ENCODE measurements at regions of chr15 and their contacts with region 1.

Region 1: GRCh38 chr15:41774062-41774881 is at the start of gene MAPKBP1:
- DNase-seq: peak; percentile 98
- H3K4me3 Mint-ChIP-seq: peak within 1 kb of the TSS; percentile 92
- H3K27ac Mint-ChIP-seq: peak within 1 kb of the TSS; percentile 85
- H3K4me1 Mint-ChIP-seq: peaks cover 35% of the 10 kb centered on the region
- H3K27me3 Mint-ChIP-seq: no peaks in the 10 kb centered on the region
- CTCF ChIP-seq: peak; percentile 58
- total RNA-seq, gene MAPKBP1: 33.2 and 35.0 TPM in 2 replicates

Region 2: GRCh38 chr15:41465822-41466421 is 308.4 kb before region 1 on chr15:
- CTCF ChIA-PET with region 1: interaction called, 5 read pairs
- POLR2A ChIA-PET with region 1: interaction called, 3 read pairs
- intact Hi-C with region 1: loop called (anchors 1 kb)
- DNase-seq: peak; percentile 59
- H3K4me3 Mint-ChIP-seq: no peak overlapping the region
- H3K27ac Mint-ChIP-seq: no peak overlapping the region
- H3K4me1 Mint-ChIP-seq: peaks cover 5% of the 10 kb centered on the region
- H3K27me3 Mint-ChIP-seq: no peaks in the 10 kb centered on the region
- CTCF ChIP-seq: peak; percentile 93

Region 3: GRCh38 chr15:41648770-41649169 is 125.5 kb before region 1 on chr15:
- CTCF ChIA-PET with region 1: no interaction called
- POLR2A ChIA-PET with region 1: no interaction called
- intact Hi-C with region 1: no loop called
- DNase-seq: no peak
- H3K4me3 Mint-ChIP-seq: no peak overlapping the region
- H3K27ac Mint-ChIP-seq: no peak overlapping the region
- H3K4me1 Mint-ChIP-seq: no peaks in the 10 kb centered on the region
- H3K27me3 Mint-ChIP-seq: no peaks in the 10 kb centered on the region
- CTCF ChIP-seq: no peak

Region 4: GRCh38 chr15:41730543-41730942 is 43.7 kb before region 1 on chr15:
- CTCF ChIA-PET with region 1: no interaction called
- POLR2A ChIA-PET with region 1: no interaction called
- intact Hi-C with region 1: no loop called
- DNase-seq: no peak
- H3K4me3 Mint-ChIP-seq: no peak overlapping the region
- H3K27ac Mint-ChIP-seq: no peak overlapping the region
- H3K4me1 Mint-ChIP-seq: no peaks in the 10 kb centered on the region
- H3K27me3 Mint-ChIP-seq: no peaks in the 10 kb centered on the region
- CTCF ChIP-seq: no peak

Region 5: GRCh38 chr15:41749526-41749925 is 24.7 kb before region 1 on chr15:
- CTCF ChIA-PET with region 1: interaction called, 11 read pairs
- POLR2A ChIA-PET with region 1: no interaction called
- intact Hi-C with region 1: no loop called
- DNase-seq: no peak
- H3K4me3 Mint-ChIP-seq: no peak overlapping the region
- H3K27ac Mint-ChIP-seq: no peak overlapping the region
- H3K4me1 Mint-ChIP-seq: no peaks in the 10 kb centered on the region
- H3K27me3 Mint-ChIP-seq: no peaks in the 10 kb centered on the region
- CTCF ChIP-seq: no peak

Region 6: GRCh38 chr15:41795996-41796856 is 22.0 kb after region 1 on chr15:
- CTCF ChIA-PET with region 1: interaction called, 147 read pairs
- POLR2A ChIA-PET with region 1: interaction called, 486 read pairs
- intact Hi-C with region 1: no loop called
- DNase-seq: peak; percentile 48
- H3K4me3 Mint-ChIP-seq: peak overlapping the region; percentile 1
- H3K27ac Mint-ChIP-seq: peak overlapping the region; percentile 87
- H3K4me1 Mint-ChIP-seq: peaks cover 42% of the 10 kb centered on the region
- H3K27me3 Mint-ChIP-seq: no peaks in the 10 kb centered on the region
- CTCF ChIP-seq: no peak

Region 7: GRCh38 chr15:41811432-41812195 is 37.3 kb after region 1 on chr15:
- CTCF ChIA-PET with region 1: interaction called, 249 read pairs
- POLR2A ChIA-PET with region 1: interaction called, 486 read pairs
- intact Hi-C with region 1: loop called (anchors 1 kb)
- DNase-seq: peak; percentile 82
- H3K4me3 Mint-ChIP-seq: no peak overlapping the region
- H3K27ac Mint-ChIP-seq: no peak overlapping the region
- H3K4me1 Mint-ChIP-seq: peaks cover 8% of the 10 kb centered on the region
- H3K27me3 Mint-ChIP-seq: no peaks in the 10 kb centered on the region
- CTCF ChIP-seq: peak; percentile 87

Region 8: GRCh38 chr15:41827880-41828806 is 53.9 kb after region 1 on chr15 and contains the start of gene JMJD7:
- CTCF ChIA-PET with region 1: interaction called, 11 read pairs
- POLR2A ChIA-PET with region 1: interaction called, 19 read pairs
- intact Hi-C with region 1: no loop called
- DNase-seq: peak; percentile 85
- H3K4me3 Mint-ChIP-seq: peak within 1 kb of the TSS; percentile 87
- H3K27ac Mint-ChIP-seq: peak within 1 kb of the TSS; percentile 76
- H3K4me1 Mint-ChIP-seq: peaks cover 13% of the 10 kb centered on the region
- H3K27me3 Mint-ChIP-seq: no peaks in the 10 kb centered on the region
- CTCF ChIP-seq: no peak
- total RNA-seq, gene JMJD7: 9.2 and 13.3 TPM in 2 replicates

Region 9: GRCh38 chr15:41972253-41973242 is 198.3 kb after region 1 on chr15 and contains the start of gene EHD4:
- CTCF ChIA-PET with region 1: interaction called, 7 read pairs
- POLR2A ChIA-PET with region 1: interaction called, 10 read pairs
- intact Hi-C with region 1: loop called (anchors 5 kb)
- DNase-seq: peak; percentile 100
- H3K4me3 Mint-ChIP-seq: peak within 1 kb of the TSS; percentile 82
- H3K27ac Mint-ChIP-seq: peak within 1 kb of the TSS; percentile 83
- H3K4me1 Mint-ChIP-seq: peaks cover 40% of the 10 kb centered on the region
- H3K27me3 Mint-ChIP-seq: no peaks in the 10 kb centered on the region
- CTCF ChIP-seq: no peak
- total RNA-seq, gene EHD4: 24.2 and 27.1 TPM in 2 replicates